Activated T-helper 1 cell treated with anti-CD3 and anti-CD28 coated beads, Interleukin-12 subunit alpha, Interleukin-12 subunit beta, Interleukin-2, Interleukin-4 antibody, amounts not matched to agents 30 ng/mL and 10 ng/mL and 1 ng/mL, durations not matched to agents 14 hours and 24 hours and 36 hours (primary cell): ENCODE measurements at regions of chr2 and their contacts with region 1.

Region 1: GRCh38 chr2:240832205-240832727 is 12.2 kb upstream of the KIF1A start:
- DNase-seq: peak; percentile 97
- H3K4me3 Mint-ChIP-seq: no peak overlapping the region
- H3K27ac Mint-ChIP-seq: no peak overlapping the region
- H3K4me1 Mint-ChIP-seq: no peaks in the 10 kb centered on the region
- H3K27me3 Mint-ChIP-seq: peaks cover 27% of the 10 kb centered on the region

Region 2: GRCh38 chr2:240136013-240136670 is 696.1 kb before region 1 on chr2 and contains the start of gene COPS9:
- intact Hi-C with region 1: loop called (anchors 2 kb)
- DNase-seq: peak; percentile 85
- H3K4me3 Mint-ChIP-seq: peak within 1 kb of the TSS; percentile 92
- H3K27ac Mint-ChIP-seq: peak within 1 kb of the TSS; percentile 84
- H3K4me1 Mint-ChIP-seq: peaks cover 25% of the 10 kb centered on the region
- H3K27me3 Mint-ChIP-seq: peaks cover 6% of the 10 kb centered on the region
- total RNA-seq, gene COPS9: 127 and 132 TPM in 2 replicates

Region 3: DNA sequence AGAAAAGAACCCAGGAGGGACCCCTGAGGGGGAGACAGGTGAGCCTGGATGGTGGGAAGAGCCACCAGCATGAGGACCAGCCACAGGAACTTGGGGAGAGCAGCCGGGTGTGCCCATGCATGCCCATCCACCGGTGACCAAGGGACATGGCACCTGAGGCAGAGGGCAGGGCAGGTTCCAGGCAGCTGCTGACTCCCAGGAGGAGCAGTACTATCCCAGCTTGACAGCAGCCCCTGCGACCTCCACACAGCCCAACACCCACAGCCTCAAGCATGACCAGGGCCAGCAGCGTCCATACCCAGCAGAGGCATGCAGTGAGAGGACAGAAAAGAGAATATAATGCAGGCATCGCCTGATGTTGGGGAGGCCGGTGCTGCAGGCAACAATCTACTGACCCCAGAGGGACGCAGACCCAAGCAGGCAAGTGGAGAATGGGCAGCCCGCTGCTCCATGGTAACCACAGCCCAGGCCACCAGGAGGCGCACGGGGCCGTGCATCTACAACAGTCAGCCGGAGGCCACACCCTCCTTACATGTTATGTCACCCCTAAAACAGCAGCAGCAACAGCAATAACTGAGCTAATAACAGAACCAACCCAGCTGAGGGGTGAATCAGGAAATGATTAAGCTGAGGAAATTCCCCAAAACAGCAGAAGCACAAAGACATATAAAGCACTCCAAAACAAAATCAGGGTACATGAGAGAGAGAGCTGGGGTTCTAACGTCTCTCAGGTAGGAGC is 318.5 kb before region 1 on chr2:
- intact Hi-C with region 1: loop called (anchors 1 kb)
- DNase-seq: peak; percentile 74
- H3K4me3 Mint-ChIP-seq: no peak overlapping the region
- H3K27ac Mint-ChIP-seq: peak overlapping the region; percentile 9
- H3K4me1 Mint-ChIP-seq: peaks cover 9% of the 10 kb centered on the region
- H3K27me3 Mint-ChIP-seq: no peaks in the 10 kb centered on the region

Region 4: DNA sequence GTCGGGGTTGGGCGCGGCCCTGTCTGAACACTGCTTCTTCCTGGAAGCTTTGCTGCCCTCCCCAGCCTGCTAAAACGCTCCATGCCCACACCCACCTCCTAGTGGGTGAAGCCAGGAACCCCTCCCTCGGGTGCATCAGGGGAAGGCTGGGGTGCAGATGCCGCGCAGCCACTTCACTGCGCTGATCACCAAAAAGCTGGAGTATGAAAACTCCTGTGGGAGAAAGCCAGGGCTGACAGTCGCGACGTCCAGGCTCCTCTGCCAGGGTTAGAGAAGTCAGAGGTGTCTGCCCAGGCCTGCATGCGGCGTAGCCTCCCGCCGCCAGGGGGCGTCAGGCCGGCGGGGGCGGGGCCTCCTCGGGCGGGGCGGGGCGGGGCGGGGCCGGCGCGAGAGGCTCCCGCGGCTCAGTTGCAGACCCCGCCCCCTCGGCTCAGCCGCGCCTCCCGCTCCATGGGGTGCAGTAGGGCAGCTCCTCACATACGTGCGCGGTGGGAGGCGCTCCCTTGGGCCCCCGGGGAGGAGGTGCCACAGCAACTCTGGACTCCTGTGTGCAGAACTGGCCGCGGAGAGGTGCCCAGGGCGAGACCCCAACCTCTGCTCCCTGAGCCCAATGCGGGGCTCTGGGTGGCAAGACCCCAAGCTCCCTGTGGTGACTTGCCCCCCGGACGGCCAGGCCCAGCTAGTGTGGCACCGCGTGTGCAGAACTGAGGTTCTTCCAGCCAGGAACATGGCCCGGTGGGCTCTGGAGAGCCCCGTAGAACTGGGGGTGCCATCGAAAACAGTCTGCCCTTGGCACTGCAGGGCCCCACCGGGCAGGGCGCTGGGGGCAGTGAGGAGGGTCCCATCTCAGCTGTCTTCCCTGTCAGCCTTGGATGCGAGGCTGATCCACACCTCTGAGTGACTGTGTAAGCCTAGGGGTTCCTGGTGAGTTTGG is 265.8 kb before region 1 on chr2:
- intact Hi-C with region 1: loop called (anchors 1 kb)
- DNase-seq: peak; percentile 93
- H3K4me3 Mint-ChIP-seq: peak overlapping the region; percentile 93
- H3K27ac Mint-ChIP-seq: peak overlapping the region; percentile 99
- H3K4me1 Mint-ChIP-seq: peaks cover 83% of the 10 kb centered on the region
- H3K27me3 Mint-ChIP-seq: no peaks in the 10 kb centered on the region

Region 5: DNA sequence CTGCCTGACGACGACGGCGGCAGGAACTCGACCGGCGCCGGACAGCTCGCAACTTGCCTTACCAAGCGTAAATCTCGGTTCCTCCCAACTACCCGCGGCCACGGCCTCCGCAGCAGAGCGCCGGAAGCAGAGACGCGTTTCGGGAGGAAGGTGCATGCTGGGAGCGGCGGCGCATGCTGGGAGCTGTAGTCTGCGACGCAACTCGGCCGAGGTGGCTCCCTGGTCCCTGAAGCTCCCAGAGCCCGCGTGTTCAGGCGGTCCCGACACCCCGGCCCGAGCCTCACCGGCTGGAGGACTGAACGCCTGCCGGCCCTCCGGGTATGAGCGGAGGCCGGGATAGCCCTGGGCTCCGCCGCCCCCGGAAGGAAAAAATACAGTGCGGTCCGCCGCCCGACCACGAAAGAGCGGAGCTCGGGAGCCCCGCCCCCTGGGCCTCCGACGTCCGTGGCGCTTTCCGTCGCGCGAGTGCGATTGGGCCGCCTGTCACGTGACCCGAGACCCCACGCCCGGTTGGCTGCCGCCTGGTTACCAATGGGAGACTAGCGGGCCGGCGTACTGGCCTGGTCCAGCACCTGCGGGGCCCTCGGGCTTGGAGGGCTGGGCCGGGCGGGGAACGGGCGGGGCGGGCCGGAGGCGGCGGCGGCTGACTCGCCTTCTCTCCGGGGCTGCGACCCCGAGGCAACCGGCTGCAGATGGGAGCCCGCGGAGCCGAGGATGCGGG is 245.9 kb before region 1 on chr2 and contains the start of gene CAPN10:
- intact Hi-C with region 1: loop called (anchors 1 kb)
- DNase-seq: peak; percentile 97
- H3K4me3 Mint-ChIP-seq: peak within 1 kb of the TSS; percentile 96
- H3K27ac Mint-ChIP-seq: peak within 1 kb of the TSS; percentile 93
- H3K4me1 Mint-ChIP-seq: peaks cover 38% of the 10 kb centered on the region
- H3K27me3 Mint-ChIP-seq: no peaks in the 10 kb centered on the region
- total RNA-seq, gene CAPN10: 49.8 and 55.4 TPM in 2 replicates

Region 6: GRCh38 chr2:240998120-240998994 is 166.1 kb after region 1 on chr2 and contains the start of gene SNED1:
- intact Hi-C with region 1: loop called (anchors 1 kb)
- DNase-seq: peak; percentile 70
- H3K4me3 Mint-ChIP-seq: peak within 1 kb of the TSS; percentile 53
- H3K27ac Mint-ChIP-seq: no peak within 1 kb of the TSS
- H3K4me1 Mint-ChIP-seq: no peaks in the 10 kb centered on the region
- H3K27me3 Mint-ChIP-seq: peaks cover 25% of the 10 kb centered on the region
- total RNA-seq, gene SNED1: 1.6 and 2.5 TPM in 2 replicates

Region 7: GRCh38 chr2:241149925-241150659 is 317.8 kb after region 1 on chr2 and contains the start of gene PPP1R7:
- intact Hi-C with region 1: loop called (anchors 1 kb)
- DNase-seq: peak; percentile 91
- H3K4me3 Mint-ChIP-seq: peak within 1 kb of the TSS; percentile 95
- H3K27ac Mint-ChIP-seq: peak within 1 kb of the TSS; percentile 95
- H3K4me1 Mint-ChIP-seq: peaks cover 61% of the 10 kb centered on the region
- H3K27me3 Mint-ChIP-seq: no peaks in the 10 kb centered on the region
- total RNA-seq, gene PPP1R7: 115 and 118 TPM in 2 replicates

Region 8: DNA sequence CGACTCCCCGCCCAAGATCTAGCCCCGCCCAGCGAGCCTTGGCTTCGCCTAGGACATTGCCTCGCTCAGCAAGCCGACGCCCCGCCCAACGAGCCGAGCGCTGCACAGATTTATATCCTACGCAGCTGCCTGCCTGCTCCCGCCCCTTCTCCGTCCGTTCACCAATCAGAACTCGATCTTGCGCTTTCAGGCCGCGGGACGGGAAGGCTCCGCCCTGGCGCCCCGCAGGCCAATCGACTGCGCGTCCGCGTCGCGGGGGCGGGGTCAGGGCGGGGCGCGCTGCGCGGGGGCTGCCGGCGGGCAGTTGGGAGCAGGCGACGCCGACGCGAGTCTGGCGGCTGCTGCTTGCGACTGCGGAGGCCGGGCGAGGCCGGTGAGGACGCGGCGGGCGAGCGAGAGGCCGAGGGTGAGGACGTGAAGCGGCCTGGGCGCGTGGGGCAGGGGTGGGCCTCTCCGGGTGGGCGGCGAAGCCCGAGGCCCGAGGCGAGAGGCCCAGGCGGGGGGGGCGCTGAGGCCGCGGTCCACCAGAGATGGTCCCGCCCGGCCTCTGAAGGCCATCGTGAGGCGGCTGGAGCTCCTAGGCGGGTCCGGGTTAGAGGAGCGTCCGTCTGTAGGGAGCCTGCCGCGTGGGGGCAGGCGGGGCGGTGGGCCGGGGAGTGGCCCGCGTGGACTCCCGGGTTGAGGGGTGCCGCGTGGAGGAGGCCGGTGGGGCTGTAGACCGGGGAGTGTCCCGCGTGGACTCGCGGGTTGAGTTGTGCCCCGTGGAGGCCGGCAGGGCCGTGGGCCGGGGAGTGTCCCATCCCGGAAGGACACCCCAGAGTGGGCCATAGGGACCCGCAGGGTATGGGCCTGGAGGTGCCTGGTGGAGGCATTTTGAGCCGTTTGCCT is 524.0 kb after region 1 on chr2 and contains the start of gene FARP2:
- intact Hi-C with region 1: no loop called
- DNase-seq: peak; percentile 95
- H3K4me3 Mint-ChIP-seq: peak within 1 kb of the TSS; percentile 84
- H3K27ac Mint-ChIP-seq: peak within 1 kb of the TSS; percentile 83
- H3K4me1 Mint-ChIP-seq: peaks cover 22% of the 10 kb centered on the region
- H3K27me3 Mint-ChIP-seq: peaks cover 2% of the 10 kb centered on the region
- total RNA-seq, gene FARP2: 36.6 and 40.9 TPM in 2 replicates